K562 (cell line): ENCODE measurements at regions of chr3 and their contacts with region 1.

Region 1: DNA sequence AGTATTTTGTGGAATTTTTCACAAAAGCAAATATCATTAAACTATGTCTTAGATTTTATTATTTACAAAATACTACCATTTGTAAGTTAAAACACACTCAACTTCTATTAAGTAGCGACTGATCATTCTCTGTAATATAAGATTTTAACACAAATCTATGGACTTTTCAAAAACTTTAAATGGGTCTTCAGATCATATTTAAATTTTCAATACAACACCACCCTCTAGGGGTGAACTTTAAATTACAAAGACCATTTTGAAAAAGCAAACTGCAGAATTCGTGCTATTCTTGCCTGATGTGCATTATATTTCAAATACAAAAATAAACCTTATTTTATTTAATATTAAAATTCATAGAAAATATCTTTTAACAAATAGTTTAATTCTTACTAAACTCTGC is 8.2 kb upstream of the VGLL4 start:
- DNase-seq: peak in 3 of 4 experiments; percentile 30 to 54 (median 38)
- ATAC-seq: no peak
- H3K4me3 ChIP-seq: no peak overlapping the region
- H3K27ac ChIP-seq: no peak overlapping the region
- H3K4me1 ChIP-seq: no peaks in the 10 kb centered on the region
- H3K27me3 ChIP-seq: peaks cover 25 to 31% of the 10 kb centered on the region in 2 experiments
- CTCF ChIP-seq: peak in 2 of 3 experiments; percentile 36 to 67; a peak in 3 of 6 replicates
- EP300 ChIP-seq: no peak
- POLR2A ChIP-seq: no peak
- RAD21 ChIP-seq: peak; percentile 82 to 84

Region 2: GRCh38 chr3:10758304-10759061 is 893.4 kb before region 1 on chr3:
- CTCF ChIA-PET with region 1: no interaction called
- POLR2A ChIA-PET with region 1: no interaction called
- in situ Hi-C with region 1: loop called (anchors 25 kb)
- intact Hi-C with region 1: no loop called
- DNase-seq: peak; percentile 76 to 85 (median 84)
- ATAC-seq: peak; percentile 99
- H3K4me3 ChIP-seq: no peak overlapping the region
- H3K27ac ChIP-seq: no peak overlapping the region
- H3K4me1 ChIP-seq: no peaks in the 10 kb centered on the region
- H3K27me3 ChIP-seq: peaks cover 0 to 9% of the 10 kb centered on the region in 2 experiments; a peak in 2 of 5 replicates
- CTCF ChIP-seq: peak; percentile 85 to 97 (median 96)
- EP300 ChIP-seq: no peak
- POLR2A ChIP-seq: no peak
- RAD21 ChIP-seq: peak; percentile 76 to 89

Region 3: DNA sequence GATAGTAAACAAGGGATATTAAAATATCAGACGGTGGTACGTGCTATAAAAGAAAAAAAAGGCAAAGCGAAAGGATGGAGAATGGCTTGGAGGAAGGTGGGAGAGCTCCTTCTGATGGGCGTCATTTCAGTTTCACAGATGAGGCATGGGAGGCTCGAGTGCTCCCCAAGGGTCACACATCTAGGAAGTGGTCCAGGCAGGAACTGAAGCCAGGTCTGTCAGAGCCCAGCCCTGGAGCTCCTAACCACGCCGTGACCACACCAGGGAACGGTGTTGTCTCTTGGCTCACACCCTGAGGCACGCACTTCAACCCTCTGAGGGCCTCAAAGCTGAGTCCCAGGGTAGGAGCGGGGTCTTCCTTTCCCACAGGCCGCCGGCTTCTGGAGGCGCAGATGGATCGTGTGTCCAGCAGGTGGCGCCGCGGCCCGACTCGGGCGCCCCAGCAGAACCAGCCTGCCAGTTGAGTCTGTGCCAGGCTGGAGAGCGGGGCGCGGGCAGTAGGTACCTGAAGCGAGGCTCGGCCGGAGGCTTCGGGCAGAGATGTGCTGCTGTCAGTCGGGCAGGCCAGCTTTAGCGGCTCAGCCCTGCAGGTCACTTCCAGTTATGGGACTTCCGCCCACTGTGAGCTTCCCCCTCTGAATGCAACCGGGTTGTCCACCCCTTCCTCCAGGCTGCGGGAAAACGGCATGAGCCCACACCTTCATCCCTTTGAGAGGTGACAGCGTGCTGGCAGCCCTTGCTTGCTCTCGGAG is 591.2 kb before region 1 on chr3:
- CTCF ChIA-PET with region 1: interaction called, 15 read pairs
- POLR2A ChIA-PET with region 1: no interaction called
- in situ Hi-C with region 1: loop called (anchors 10 kb)
- intact Hi-C with region 1: loop called (anchors 1 kb)
- DNase-seq: peak; percentile 53 to 77 (median 70)
- ATAC-seq: peak; percentile 92
- H3K4me3 ChIP-seq: no peak overlapping the region
- H3K27ac ChIP-seq: no peak overlapping the region
- H3K4me1 ChIP-seq: peaks cover 0 to 10% of the 10 kb centered on the region in 2 experiments; a peak in 2 of 5 replicates
- H3K27me3 ChIP-seq: peaks cover 0 to 19% of the 10 kb centered on the region in 2 experiments; a peak in 2 of 5 replicates
- CTCF ChIP-seq: peak; percentile 71 to 87 (median 82)
- EP300 ChIP-seq: no peak
- POLR2A ChIP-seq: no peak
- RAD21 ChIP-seq: peak; percentile 66 to 79

Region 4: DNA sequence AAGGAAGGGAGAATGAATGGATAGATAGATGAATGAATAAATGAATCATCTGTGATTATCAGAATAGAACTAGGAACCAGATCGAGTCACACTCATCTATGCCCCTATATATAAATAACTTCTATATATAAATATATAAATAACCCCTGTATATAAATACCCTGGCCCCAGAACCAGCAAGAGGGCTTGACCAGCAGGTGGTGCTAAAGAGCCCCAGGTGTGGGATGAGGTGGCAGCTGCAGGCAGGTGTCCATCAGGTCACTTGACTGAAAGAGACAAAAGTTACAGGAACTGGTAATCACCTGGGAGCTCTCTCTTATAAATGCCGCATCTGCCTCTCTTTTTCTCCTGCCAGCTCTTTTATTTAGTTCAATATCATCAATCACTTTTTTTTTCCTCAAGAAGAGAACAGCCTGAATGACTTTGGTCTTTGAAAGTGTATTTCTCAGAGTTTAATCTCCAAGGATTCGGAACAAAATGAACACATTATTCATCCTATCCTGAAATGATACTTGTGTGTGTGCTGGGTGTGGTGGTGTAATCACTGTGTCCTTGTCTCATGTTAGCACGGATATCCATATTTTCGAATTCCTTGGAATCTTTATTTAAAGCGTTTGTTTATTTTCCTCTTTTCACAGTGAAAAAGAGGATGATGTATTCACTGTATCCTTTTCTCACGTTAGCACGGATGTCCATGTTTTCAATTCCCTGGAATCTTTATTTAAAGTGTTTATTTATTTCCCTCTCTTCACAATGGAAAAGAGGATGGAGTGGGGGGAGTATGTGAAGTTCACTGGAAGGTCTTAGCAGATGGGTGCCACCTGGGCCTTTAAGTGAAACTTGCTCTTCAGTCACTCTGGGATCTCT is 415.1 kb before region 1 on chr3:
- CTCF ChIA-PET with region 1: interaction called, 9 read pairs
- POLR2A ChIA-PET with region 1: no interaction called
- in situ Hi-C with region 1: loop called (anchors 5 kb)
- intact Hi-C with region 1: loop called (anchors 2 kb)
- DNase-seq: peak; percentile 70 to 79 (median 76)
- ATAC-seq: peak; percentile 96
- H3K4me3 ChIP-seq: no peak overlapping the region
- H3K27ac ChIP-seq: no peak overlapping the region
- H3K4me1 ChIP-seq: no peaks in the 10 kb centered on the region
- H3K27me3 ChIP-seq: peaks cover 13% of the 10 kb centered on the region in 2 experiments
- CTCF ChIP-seq: peak; percentile 82 to 93 (median 89)
- EP300 ChIP-seq: no peak
- POLR2A ChIP-seq: no peak
- RAD21 ChIP-seq: peak; percentile 76 to 83

Region 5: DNA sequence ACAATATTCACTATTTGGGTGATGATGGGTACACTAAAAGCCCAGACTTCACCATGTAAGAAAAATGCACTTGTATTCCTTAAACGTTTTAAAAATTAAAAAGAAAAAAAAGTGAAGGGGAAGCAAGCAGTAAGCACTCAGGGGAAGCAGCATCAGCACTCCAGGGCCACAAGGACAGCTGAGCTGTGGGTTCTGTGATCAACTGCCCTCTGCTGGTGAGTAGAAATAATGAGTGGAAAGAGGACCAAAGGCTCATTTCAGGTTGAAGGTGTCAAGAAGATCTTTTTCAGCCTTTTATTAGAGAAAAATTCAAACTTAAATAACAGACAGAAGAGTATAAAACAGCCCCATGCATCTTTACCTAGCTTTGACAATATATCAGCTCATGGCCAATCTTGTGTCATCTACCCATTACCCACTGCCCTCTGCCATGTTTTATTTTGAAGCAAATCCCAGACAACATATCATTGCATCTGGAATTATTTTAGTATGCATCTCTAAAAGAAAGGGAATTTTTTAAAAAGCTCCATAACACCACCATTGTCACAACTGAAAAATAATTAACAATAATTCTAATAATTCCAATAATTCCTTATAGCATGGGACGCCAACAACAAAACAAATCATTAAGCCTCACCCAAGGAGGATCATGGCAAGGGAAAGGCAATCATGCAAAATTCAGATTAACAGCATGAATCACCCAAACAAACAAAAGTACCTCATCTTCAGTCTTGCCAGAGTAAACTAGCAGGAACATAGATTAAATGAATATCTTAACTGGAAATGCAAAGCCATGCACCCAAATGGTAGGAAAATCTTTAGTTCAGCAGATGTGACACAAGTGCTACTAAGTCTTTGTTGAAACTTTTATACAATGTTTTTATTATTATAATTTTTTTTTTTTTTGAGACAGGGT is 152.3 kb after region 1 on chr3:
- CTCF ChIA-PET with region 1: no interaction called
- POLR2A ChIA-PET with region 1: no interaction called
- in situ Hi-C with region 1: no loop called
- intact Hi-C with region 1: loop called (anchors 5 kb)
- DNase-seq: peak; percentile 56 to 77 (median 64)
- ATAC-seq: peak; percentile 94
- H3K4me3 ChIP-seq: no peak overlapping the region
- H3K27ac ChIP-seq: no peak overlapping the region
- H3K4me1 ChIP-seq: no peaks in the 10 kb centered on the region
- H3K27me3 ChIP-seq: no peaks in the 10 kb centered on the region
- CTCF ChIP-seq: peak; percentile 71 to 80 (median 76)
- EP300 ChIP-seq: no peak
- POLR2A ChIP-seq: no peak
- RAD21 ChIP-seq: peak in 1 of 2 experiments; percentile 69; a peak in 3 of 4 replicates